ENCODE measurements at regions of chr3 and their contacts with region 1.

Region 1: DNA sequence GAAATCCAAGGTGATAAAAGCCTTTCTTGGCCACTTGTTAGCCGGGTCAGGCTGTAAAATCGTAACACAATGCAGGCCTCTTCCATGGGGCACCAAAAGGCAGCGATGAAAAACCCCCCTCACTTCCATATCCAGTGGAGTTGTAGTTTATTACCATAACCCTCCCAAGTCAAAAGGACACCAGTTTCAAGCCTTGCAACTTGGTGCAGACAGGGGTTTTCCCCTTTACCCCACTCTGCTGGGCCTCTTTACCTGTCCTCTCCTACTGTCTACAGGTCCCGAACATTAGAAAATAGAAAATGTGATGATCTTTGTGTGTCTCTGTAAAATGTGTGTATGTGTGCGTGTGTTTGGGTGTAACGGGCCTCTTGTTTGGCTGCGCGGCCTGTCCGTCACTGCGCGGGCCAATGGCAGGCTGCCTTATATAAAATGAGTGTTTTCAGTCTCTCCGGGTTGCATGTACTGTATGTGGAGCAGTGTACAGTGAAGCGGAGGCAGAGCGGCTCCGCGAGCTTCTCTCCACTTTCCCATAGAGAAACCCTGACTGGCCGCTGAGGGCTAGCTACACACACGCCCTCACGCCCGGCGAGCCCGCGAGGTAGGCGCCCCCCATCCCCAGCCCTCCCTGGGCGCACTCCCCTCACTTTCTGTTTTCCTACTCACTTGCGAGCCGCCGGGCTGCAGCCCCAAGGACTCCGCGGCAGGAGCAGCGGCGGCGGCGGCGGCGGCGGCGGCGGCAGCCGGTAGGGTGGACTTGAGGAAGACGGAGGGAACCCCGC is at the start of gene BBX:
- DNase-seq: peak; percentile 89
- ATAC-seq: peak; percentile 95 to 97
- total RNA-seq, gene BBX: 38.4 to 42.1 TPM

Region 2: GRCh38 chr3:106688463-106688862 is 834.2 kb before region 1 on chr3:
- intact Hi-C with region 1: no loop called
- DNase-seq: no peak
- ATAC-seq: peak in 1 of 2 donors; percentile 44

Region 3: GRCh38 chr3:107429320-107430181 is 93.1 kb before region 1 on chr3:
- intact Hi-C with region 1: loop called in 1 of 2 experiments (anchors 5 kb)
- DNase-seq: peak; percentile 79
- ATAC-seq: peak; percentile 82 to 88

Region 4: GRCh38 chr3:107594870-107595269 is 72.2 kb after region 1 on chr3:
- intact Hi-C with region 1: loop called in 1 of 2 experiments (anchors 2 kb)
- DNase-seq: no peak
- ATAC-seq: no peak

Region 5: GRCh38 chr3:107825601-107826000 is 302.9 kb after region 1 on chr3:
- intact Hi-C with region 1: no loop called
- DNase-seq: no peak
- ATAC-seq: no peak

Measured in left cardiac atrium (tissue), 4 donors.